ENCODE measurements at regions of chr1 and their contacts with region 1.

Region 1: GRCh38 chr1:112544011-112544688 is 35.4 kb downstream of the WNT2B start:
- DNase-seq: peak; percentile 91
- ATAC-seq: peak; percentile 91
- H3K4me3 ChIP-seq: peak overlapping the region; percentile 28; the same call in 1 of the 2 replicates
- H3K27ac ChIP-seq: peak overlapping the region; percentile 76
- H3K4me1 ChIP-seq: peaks cover 20% of the 10 kb centered on the region
- H3K27me3 ChIP-seq: no peaks in the 10 kb centered on the region
- CTCF ChIP-seq: no peak

Region 2: DNA sequence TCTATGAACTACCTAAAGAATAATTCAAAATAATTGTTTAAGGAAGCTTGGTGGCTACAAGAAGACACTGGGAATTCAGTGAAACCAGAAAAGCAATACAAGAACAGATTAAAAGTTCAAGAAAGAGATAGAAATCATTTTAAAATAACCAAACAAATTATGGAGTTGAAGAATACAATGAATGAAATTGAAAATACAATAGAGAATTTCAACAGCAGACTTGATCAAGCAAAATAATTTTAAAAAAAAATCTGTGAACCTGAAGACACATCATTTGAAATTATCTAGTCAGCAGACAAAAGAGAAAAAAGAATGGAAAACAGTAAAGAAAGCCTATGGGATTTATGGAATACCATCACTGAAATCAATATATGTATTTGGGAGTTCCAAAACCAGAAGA is 66.6 kb before region 1 on chr1:
- CTCF ChIA-PET with region 1: no interaction called
- POLR2A ChIA-PET with region 1: no interaction called
- intact Hi-C with region 1: no loop called
- DNase-seq: no peak
- ATAC-seq: no peak
- H3K4me3 ChIP-seq: no peak overlapping the region
- H3K27ac ChIP-seq: no peak overlapping the region
- H3K4me1 ChIP-seq: no peaks in the 10 kb centered on the region
- H3K27me3 ChIP-seq: no peaks in the 10 kb centered on the region
- CTCF ChIP-seq: no peak

Region 3: DNA sequence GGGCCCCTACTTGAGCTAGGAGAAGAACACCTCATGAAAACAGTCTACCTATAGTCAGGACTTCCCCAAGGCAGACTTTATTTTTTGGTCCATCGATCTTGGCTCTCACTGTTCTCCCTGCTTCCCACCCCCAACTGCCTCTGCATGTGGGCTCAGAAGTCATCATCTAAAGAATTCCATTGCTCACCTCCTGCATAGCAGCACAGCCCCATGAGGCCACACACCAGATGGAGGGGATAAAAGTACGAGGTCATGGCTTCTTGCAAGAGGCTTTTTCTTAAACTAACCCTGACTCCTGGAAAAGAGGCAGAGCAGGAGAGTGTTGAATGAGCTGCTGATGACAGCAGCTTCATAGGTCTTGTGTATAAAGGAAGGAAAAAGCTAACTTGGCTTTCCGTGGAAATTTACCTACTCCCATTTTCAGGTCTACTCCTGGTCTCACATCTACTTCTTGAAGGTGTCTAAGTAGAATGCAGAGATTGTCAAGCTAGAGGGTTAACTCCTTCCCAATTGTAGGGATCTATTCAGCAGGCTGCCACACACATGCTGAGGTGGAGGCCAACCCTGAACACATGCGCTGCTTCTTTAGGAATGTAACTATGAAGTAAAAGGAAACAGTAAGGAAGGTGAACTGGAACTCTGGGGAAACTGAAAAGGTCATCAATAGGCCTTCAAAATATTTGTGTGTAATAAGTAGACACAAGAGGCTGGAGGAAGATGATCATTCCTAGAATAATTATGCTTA is 16.7 kb before region 1 on chr1:
- CTCF ChIA-PET with region 1: interaction called, 12 read pairs
- POLR2A ChIA-PET with region 1: no interaction called
- intact Hi-C with region 1: loop called (anchors 2 kb)
- DNase-seq: no peak
- ATAC-seq: no peak
- H3K4me3 ChIP-seq: no peak overlapping the region
- H3K27ac ChIP-seq: no peak overlapping the region
- H3K4me1 ChIP-seq: peaks cover 22% of the 10 kb centered on the region
- H3K27me3 ChIP-seq: no peaks in the 10 kb centered on the region
- CTCF ChIP-seq: no peak

Region 4: GRCh38 chr1:112557385-112557784 is 13.2 kb after region 1 on chr1:
- CTCF ChIA-PET with region 1: no interaction called
- POLR2A ChIA-PET with region 1: interaction called, 13 read pairs
- intact Hi-C with region 1: no loop called
- DNase-seq: no peak
- ATAC-seq: no peak
- H3K4me3 ChIP-seq: no peak overlapping the region
- H3K27ac ChIP-seq: no peak overlapping the region
- H3K4me1 ChIP-seq: no peaks in the 10 kb centered on the region
- H3K27me3 ChIP-seq: no peaks in the 10 kb centered on the region
- CTCF ChIP-seq: no peak

Region 5: DNA sequence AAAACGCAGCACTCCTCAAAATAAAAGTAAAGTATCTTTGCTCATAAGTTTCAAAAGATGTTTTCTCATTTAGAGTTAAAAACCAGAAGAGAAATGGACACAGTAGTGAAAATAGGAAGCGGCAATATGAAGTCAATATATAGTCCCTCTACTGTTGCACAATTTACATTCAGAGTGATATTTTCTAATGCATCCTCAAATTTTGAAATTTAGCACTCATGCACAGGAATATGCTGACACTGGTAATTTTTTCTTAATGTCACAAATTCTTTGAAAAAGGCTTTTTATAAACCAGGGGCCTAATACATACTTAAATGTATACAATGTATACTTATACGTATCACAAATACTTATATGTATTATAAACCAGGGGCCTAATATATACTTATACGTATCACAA is 55.3 kb after region 1 on chr1:
- CTCF ChIA-PET with region 1: no interaction called
- POLR2A ChIA-PET with region 1: no interaction called
- intact Hi-C with region 1: loop called (anchors 5 kb)
- DNase-seq: no peak
- ATAC-seq: no peak
- H3K4me3 ChIP-seq: no peak overlapping the region
- H3K27ac ChIP-seq: no peak overlapping the region
- H3K4me1 ChIP-seq: no peaks in the 10 kb centered on the region
- H3K27me3 ChIP-seq: no peaks in the 10 kb centered on the region
- CTCF ChIP-seq: no peak

Measured in PC-3 (cell line).